BJ (cell line): ENCODE measurements at regions of chr2 and their contacts with region 1.

Region 1: GRCh38 chr2:27977608-27978312 is 87.2 kb downstream of the BABAM2 start:
- DNase-seq: peak; percentile 85
- H3K4me3 ChIP-seq: no peak overlapping the region
- H3K27me3 ChIP-seq: no peaks in the 10 kb centered on the region
- CTCF ChIP-seq: no peak

Region 2: GRCh38 chr2:27713201-27713600 is 264.6 kb before region 1 on chr2:
- CTCF ChIA-PET with region 1: no interaction called
- POLR2A ChIA-PET with region 1: interaction called, 28 read pairs
- DNase-seq: no peak
- H3K4me3 ChIP-seq: no peak overlapping the region
- H3K27me3 ChIP-seq: no peaks in the 10 kb centered on the region
- CTCF ChIP-seq: no peak

Region 3: GRCh38 chr2:27960237-27960912 is 17.4 kb before region 1 on chr2:
- CTCF ChIA-PET with region 1: no interaction called
- POLR2A ChIA-PET with region 1: interaction called, 10 read pairs
- DNase-seq: peak; percentile 81
- H3K4me3 ChIP-seq: no peak overlapping the region; the same call in 1 of the 2 replicates
- H3K27me3 ChIP-seq: no peaks in the 10 kb centered on the region
- CTCF ChIP-seq: no peak

Region 4: GRCh38 chr2:27992787-27993401 is 15.1 kb after region 1 on chr2:
- CTCF ChIA-PET with region 1: no interaction called
- POLR2A ChIA-PET with region 1: no interaction called
- DNase-seq: no peak
- H3K4me3 ChIP-seq: no peak overlapping the region
- H3K27me3 ChIP-seq: no peaks in the 10 kb centered on the region
- CTCF ChIP-seq: no peak